ENCODE measurements at regions of chr1 and their contacts with region 1.

Region 1: GRCh38 chr1:77948841-77949424 is 29.9 kb downstream of the FUBP1 start:
- DNase-seq: no peak
- H3K4me3 Mint-ChIP-seq: no peak overlapping the region
- H3K27ac Mint-ChIP-seq: no peak overlapping the region
- H3K4me1 Mint-ChIP-seq: peaks cover 22% of the 10 kb centered on the region
- H3K27me3 Mint-ChIP-seq: no peaks in the 10 kb centered on the region

Region 2: DNA sequence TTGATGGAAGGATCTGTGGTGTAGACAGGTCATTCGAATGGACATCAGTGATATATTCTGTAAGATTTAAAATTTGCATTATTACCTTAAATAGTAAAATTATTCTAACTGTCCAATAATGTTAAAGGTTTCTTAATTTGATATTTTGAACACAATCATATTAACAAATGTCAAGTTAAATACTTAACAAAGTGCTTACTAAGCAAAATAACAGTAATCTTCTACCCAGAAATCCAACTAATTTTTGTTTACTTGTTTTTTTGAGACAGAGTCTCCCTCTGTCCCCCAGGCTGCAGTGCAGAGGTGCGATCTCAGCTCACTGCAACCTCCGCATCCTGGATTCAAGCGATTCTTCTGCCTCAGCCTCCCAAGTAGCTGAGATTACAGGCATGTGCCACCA is 223.2 kb before region 1 on chr1:
- intact Hi-C with region 1: loop called (anchors 10 kb)
- DNase-seq: no peak
- H3K4me3 Mint-ChIP-seq: no peak overlapping the region
- H3K27ac Mint-ChIP-seq: no peak overlapping the region
- H3K4me1 Mint-ChIP-seq: no peaks in the 10 kb centered on the region
- H3K27me3 Mint-ChIP-seq: no peaks in the 10 kb centered on the region

Region 3: GRCh38 chr1:77825131-77825709 is 123.7 kb before region 1 on chr1:
- intact Hi-C with region 1: loop called (anchors 10 kb)
- DNase-seq: no peak
- H3K4me3 Mint-ChIP-seq: no peak overlapping the region
- H3K27ac Mint-ChIP-seq: no peak overlapping the region
- H3K4me1 Mint-ChIP-seq: no peaks in the 10 kb centered on the region
- H3K27me3 Mint-ChIP-seq: no peaks in the 10 kb centered on the region

Region 4: DNA sequence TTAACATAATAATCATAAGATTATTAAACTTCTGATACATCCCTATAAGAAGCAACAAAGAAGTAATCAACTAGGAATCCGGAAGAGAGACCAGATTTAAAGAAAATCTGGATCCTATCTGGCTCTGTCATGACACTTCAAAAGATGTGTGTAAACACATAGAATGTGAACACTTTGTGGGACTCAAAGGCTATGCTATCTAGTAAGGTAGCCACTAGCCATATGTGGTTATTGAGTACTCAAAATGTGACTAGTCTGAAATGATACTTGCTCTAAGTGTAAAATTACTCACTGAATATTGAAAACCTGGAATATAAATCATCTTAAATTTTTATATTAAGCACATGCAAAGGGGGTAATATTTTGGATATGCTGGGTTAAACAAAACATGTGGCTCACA is 21.3 kb after region 1 on chr1:
- intact Hi-C with region 1: loop called (anchors 2 kb)
- DNase-seq: no peak
- H3K4me3 Mint-ChIP-seq: no peak overlapping the region
- H3K27ac Mint-ChIP-seq: no peak overlapping the region
- H3K4me1 Mint-ChIP-seq: peaks cover 36% of the 10 kb centered on the region
- H3K27me3 Mint-ChIP-seq: no peaks in the 10 kb centered on the region